RWPE1 (cell line): ENCODE measurements at regions of chr9 and their contacts with region 1.

Region 1: DNA sequence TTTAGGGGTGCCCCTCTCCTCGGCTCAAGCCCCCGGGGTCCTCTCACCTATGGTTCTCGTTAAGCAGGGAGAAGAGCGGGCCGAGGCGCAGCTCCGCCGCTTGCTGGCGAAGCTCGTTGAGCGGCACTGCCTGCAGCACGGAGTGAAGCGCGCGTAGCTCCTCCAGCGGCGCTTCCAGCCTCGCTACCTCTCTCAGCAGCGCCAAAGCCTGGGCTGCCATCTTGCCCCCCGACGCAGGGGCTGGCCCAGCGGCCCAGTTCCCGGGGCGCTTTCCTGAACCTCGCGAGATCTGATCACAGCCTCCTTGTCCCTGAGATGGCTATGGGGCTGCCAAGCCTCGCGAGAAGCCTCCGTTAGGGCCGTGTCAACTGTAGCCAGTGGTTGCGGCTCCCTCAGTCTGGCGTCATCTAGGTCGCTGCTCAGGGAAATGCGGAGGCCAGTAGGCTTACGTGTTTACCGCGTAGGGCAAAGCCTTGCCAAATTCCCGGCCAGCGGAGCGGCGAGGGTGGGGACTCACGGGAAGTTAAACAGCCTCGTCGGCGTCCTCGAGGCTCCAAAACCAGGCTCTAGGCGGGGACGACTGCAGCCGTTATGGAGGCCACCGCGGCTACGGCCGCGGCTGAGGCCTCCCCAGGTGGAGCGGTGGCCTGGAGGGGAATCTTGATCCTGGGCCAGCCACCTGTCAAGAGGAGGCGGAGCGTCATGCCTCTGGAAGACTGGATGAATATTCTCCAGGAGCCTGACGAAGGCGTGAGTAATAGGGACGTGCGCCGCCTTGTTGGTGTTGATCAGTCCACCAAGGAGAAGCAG is at the start of gene PSMD5:
- DNase-seq: peak; percentile 100
- H3K27ac ChIP-seq: peak within 1 kb of the TSS; percentile 92
- CTCF ChIP-seq: no peak

Region 2: GRCh38 chr9:120655005-120655622 is 187.8 kb before region 1 on chr9:
- CTCF ChIA-PET with region 1: no interaction called
- POLR2A ChIA-PET with region 1: no interaction called
- DNase-seq: peak; percentile 68
- H3K27ac ChIP-seq: no peak overlapping the region
- CTCF ChIP-seq: no peak

Region 3: GRCh38 chr9:120889606-120890271 is 46.8 kb after region 1 on chr9:
- CTCF ChIA-PET with region 1: no interaction called
- POLR2A ChIA-PET with region 1: interaction called, 14 read pairs
- DNase-seq: no peak
- H3K27ac ChIP-seq: no peak overlapping the region
- CTCF ChIP-seq: no peak